GM12878 (cell line): ENCODE measurements at regions of chr3 and their contacts with region 1.

Region 1: DNA sequence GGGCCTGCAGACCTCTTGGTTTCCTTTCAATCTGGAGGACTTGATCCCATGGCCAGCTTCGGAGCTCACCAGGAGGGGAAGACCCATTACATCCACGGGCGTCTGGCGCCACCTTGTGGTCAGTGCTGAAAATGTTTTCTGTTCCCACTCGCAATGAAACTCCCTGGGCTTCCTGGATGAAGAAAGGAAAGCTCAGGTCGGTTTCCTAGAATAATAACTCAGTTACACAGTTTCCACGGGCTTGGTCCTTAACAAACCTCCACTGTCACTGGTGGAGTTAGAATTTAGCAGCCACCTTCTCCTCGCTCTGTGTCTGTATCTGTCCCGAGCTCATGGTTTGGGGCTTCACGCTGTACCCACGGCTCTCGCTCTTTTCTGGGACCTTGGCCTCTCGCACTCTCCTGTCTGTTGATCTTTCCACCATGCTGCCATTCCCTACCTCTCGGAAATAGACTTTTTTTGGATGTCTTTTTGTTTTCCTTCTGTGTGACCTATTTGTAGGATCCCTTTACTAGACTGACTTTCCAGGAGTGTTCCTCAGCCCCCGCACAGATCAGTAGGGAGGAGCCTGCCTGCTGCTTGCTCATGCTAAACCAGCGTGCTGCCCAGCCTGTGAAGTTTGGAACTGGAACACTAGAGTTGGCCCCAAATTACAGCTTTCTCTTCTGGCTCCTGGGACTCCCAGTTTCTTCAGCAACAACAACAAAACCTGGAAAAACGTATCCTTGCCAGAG is 56.3 kb downstream of the IL20RB start:
- DNase-seq: peak; percentile 51
- ATAC-seq: peak; percentile 93
- H3K4me3 ChIP-seq: peak overlapping the region; percentile 65
- H3K27ac ChIP-seq: peak overlapping the region; percentile 48
- H3K4me1 ChIP-seq: 0 out of 2 replicates have a peak, but pooled peaks cover 4% of the 10 kb centered on the region
- H3K27me3 ChIP-seq: no peaks in the 10 kb centered on the region
- CTCF ChIP-seq: peak; percentile 78 to 92 (median 78)
- EP300 ChIP-seq: 0 out of 4 replicates have a peak, but pooled peaks of 1 of the 2 experiments have one; percentile 9
- POLR2A ChIP-seq: no peak
- RAD21 ChIP-seq: peak; percentile 99

Region 2: DNA sequence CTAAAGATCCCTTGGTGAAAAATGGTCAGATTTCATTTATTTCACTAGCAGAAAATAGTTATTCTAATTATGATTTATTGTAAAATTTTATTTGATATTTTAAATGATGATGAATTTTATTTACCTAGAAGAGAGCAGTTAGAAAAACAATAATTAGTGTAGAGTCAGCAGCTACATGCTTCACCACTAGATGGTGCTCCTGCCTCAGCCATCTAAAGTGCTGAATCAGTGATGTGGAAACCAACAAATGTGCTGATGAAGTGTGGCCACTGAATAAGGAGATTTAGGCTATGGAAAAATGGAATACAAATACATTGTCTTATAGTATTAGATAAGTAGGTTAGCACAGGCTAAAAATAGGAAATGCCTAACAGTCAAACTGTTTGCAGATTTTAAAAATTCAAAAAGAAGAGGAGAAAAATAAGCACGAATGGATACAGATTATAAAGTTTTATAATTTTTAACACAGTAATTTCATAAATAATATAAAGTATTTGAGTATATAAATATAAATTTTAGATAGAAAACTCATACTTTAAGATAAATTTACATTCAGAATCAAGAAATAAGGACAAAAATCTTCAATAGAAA is 938.8 kb before region 1 on chr3:
- CTCF ChIA-PET with region 1: interaction called, 27 read pairs
- POLR2A ChIA-PET with region 1: interaction called, 3 read pairs
- RAD21 ChIA-PET with region 1: interaction called, 25 read pairs
- SMC1A ChIA-PET with region 1: interaction called, 26 read pairs
- in situ Hi-C with region 1: loop called (anchors 5 kb)
- intact Hi-C with region 1: loop called (anchors 1 kb)
- DNase-seq: peak; percentile 40
- ATAC-seq: peak; percentile 89
- H3K4me3 ChIP-seq: no peak overlapping the region
- H3K27ac ChIP-seq: no peak overlapping the region
- H3K4me1 ChIP-seq: no peaks in the 10 kb centered on the region
- H3K27me3 ChIP-seq: no peaks in the 10 kb centered on the region; a peak in 1 of 4 replicates
- CTCF ChIP-seq: peak; percentile 76 to 96 (median 91)
- EP300 ChIP-seq: no peak
- POLR2A ChIP-seq: no peak
- RAD21 ChIP-seq: peak; percentile 99

Region 3: DNA sequence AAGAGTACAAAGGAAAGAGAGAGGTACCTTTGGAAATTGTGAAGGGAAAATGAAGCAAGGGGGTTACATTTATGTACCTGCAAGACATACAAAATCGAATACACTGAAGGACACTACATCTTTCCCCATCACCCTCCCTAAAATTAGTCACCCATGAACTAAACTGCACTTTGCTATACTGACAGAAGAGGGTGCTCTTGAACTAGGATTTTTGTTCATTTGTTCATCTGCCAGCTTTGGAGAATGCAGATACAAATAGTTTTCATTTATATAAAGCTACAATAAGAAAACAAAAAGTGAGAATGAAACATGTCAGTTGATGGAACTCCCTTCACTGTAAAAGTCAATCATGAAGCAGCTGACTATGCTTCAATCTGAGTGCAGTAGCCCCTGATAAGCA is 708.2 kb before region 1 on chr3:
- CTCF ChIA-PET with region 1: interaction called, 15 read pairs
- POLR2A ChIA-PET with region 1: no interaction called
- RAD21 ChIA-PET with region 1: interaction called, 10 read pairs
- SMC1A ChIA-PET with region 1: interaction called, 13 read pairs
- in situ Hi-C with region 1: no loop called
- intact Hi-C with region 1: loop called (anchors 1 kb)
- DNase-seq: peak; percentile 8
- ATAC-seq: peak; percentile 41; the same call in 1 of the 3 replicates
- H3K4me3 ChIP-seq: no peak overlapping the region
- H3K27ac ChIP-seq: no peak overlapping the region
- H3K4me1 ChIP-seq: no peaks in the 10 kb centered on the region
- H3K27me3 ChIP-seq: no peaks in the 10 kb centered on the region
- CTCF ChIP-seq: peak in 2 of 3 experiments; percentile 18 to 46; a peak in 4 of 6 replicates
- EP300 ChIP-seq: no peak
- POLR2A ChIP-seq: no peak
- RAD21 ChIP-seq: peak; percentile 51

Region 4: DNA sequence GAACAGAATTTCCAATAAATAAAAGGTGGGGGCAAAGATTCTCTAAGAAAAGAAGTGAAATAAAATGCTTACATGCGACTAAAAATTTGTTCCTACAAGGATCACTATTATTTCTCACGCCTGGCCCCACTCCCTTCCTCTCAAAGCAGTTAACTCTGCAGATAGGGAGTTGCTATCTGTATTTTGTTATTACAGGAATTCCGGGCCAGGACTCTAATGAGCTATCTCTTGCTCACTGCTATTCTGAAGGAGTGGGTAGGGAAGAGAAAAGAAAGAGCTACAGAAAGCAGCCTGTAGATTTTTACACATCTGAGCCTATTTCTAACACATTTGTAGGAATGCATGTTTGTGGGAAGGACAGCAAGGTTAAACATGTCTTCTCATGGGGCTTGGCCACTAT is 623.5 kb before region 1 on chr3:
- CTCF ChIA-PET with region 1: interaction called, 38 read pairs
- POLR2A ChIA-PET with region 1: no interaction called
- RAD21 ChIA-PET with region 1: interaction called, 34 read pairs
- SMC1A ChIA-PET with region 1: interaction called, 34 read pairs
- in situ Hi-C with region 1: loop called (anchors 10 kb)
- intact Hi-C with region 1: loop called (anchors 5 kb)
- DNase-seq: no peak
- ATAC-seq: no peak
- H3K4me3 ChIP-seq: no peak overlapping the region
- H3K27ac ChIP-seq: no peak overlapping the region
- H3K4me1 ChIP-seq: peaks cover 5% of the 10 kb centered on the region; the same call in 1 of the 2 replicates
- H3K27me3 ChIP-seq: no peaks in the 10 kb centered on the region
- CTCF ChIP-seq: no peak
- EP300 ChIP-seq: no peak
- POLR2A ChIP-seq: no peak
- RAD21 ChIP-seq: no peak

Region 5: GRCh38 chr3:136949708-136950107 is 64.4 kb before region 1 on chr3:
- CTCF ChIA-PET with region 1: interaction called, 11 read pairs
- POLR2A ChIA-PET with region 1: no interaction called
- RAD21 ChIA-PET with region 1: interaction called, 9 read pairs
- SMC1A ChIA-PET with region 1: interaction called, 9 read pairs
- in situ Hi-C with region 1: no loop called
- intact Hi-C with region 1: no loop called
- DNase-seq: no peak
- ATAC-seq: no peak
- H3K4me3 ChIP-seq: no peak overlapping the region
- H3K27ac ChIP-seq: no peak overlapping the region
- H3K4me1 ChIP-seq: peaks cover 15% of the 10 kb centered on the region
- H3K27me3 ChIP-seq: no peaks in the 10 kb centered on the region
- CTCF ChIP-seq: peak in 2 of 3 experiments; percentile 4 to 7; a peak in 1 of 6 replicates
- EP300 ChIP-seq: no peak
- POLR2A ChIP-seq: no peak
- RAD21 ChIP-seq: 0 out of 2 replicates have a peak, but pooled peaks have one; percentile 19

Region 6: GRCh38 chr3:137032465-137033120 is 18.5 kb after region 1 on chr3:
- CTCF ChIA-PET with region 1: interaction called, 22 read pairs
- POLR2A ChIA-PET with region 1: no interaction called
- RAD21 ChIA-PET with region 1: interaction called, 6 read pairs
- SMC1A ChIA-PET with region 1: interaction called, 9 read pairs
- in situ Hi-C with region 1: no loop called
- intact Hi-C with region 1: no loop called
- DNase-seq: peak; percentile 13
- ATAC-seq: peak; percentile 97
- H3K4me3 ChIP-seq: peak overlapping the region; percentile 22; the same call in 1 of the 2 replicates
- H3K27ac ChIP-seq: no peak overlapping the region
- H3K4me1 ChIP-seq: no peaks in the 10 kb centered on the region
- H3K27me3 ChIP-seq: no peaks in the 10 kb centered on the region
- CTCF ChIP-seq: peak; percentile 96 to 100 (median 99)
- EP300 ChIP-seq: no peak
- POLR2A ChIP-seq: no peak
- RAD21 ChIP-seq: peak; percentile 95